ENCODE measurements at regions of chr3 and their contacts with region 1.

Region 1: DNA sequence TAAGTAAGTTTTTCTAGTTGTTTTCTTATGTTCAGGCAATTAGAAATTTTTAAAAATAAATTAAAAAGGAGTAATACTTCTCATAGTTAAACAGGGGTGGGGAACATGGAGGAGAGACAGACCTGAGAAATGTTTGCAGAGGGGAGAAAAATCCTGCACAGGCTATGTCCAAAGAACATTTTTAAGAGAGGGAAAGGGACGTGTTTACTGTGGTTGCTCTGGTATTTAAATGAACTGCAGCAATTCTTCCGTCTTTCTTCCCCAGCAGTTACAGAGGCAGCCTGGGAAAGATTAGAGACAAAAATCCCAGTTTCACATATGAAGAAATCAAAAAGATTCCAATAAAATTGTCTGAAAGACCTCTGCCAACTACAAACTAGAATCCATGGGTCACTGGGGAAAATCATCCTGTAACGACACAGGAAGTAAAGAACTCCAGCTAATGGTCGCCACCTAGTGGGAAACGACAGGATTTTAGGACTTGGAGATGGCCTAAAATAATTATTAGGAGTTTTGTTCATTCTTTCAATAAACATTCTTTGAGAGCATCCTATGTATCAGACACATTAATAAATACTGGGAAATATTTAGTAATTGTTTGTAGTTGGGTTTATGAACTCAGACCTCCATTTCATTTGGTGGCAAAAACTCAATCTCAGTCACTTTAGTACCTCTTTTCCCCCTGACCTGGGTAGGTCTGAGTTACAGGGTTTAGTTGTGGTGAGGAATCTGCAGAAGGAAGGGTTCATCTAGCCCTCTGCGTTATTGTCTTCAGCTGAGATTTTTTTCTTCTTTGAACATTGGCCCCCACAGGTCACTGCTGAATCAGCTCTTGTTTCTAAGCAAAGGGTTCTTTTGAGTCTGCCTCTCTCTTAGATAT is 69.9 kb upstream of the GOLIM4 start:
- DNase-seq: peak; percentile 73
- ATAC-seq: peak; percentile 94
- H3K4me3 ChIP-seq: peak overlapping the region in 2 of 3 experiments; percentile 42 to 44; a peak in 3 of 6 replicates
- H3K27ac ChIP-seq: no peak overlapping the region
- H3K4me1 ChIP-seq: peaks cover 6% of the 10 kb centered on the region; the same call in 1 of the 2 replicates
- H3K27me3 ChIP-seq: no peaks in the 10 kb centered on the region
- CTCF ChIP-seq: peak; percentile 80
- EP300 ChIP-seq: no peak
- POLR2A ChIP-seq: no peak
- RAD21 ChIP-seq: peak; percentile 60; the same call in 1 of the 2 replicates

Region 2: GRCh38 chr3:167928381-167928780 is 237.2 kb before region 1 on chr3:
- CTCF ChIA-PET with region 1: interaction called, 5 read pairs
- POLR2A ChIA-PET with region 1: no interaction called
- in situ Hi-C with region 1: loop called (anchors 25 kb)
- intact Hi-C with region 1: loop called (anchors 1 kb)
- DNase-seq: no peak
- ATAC-seq: no peak
- H3K4me3 ChIP-seq: no peak overlapping the region
- H3K27ac ChIP-seq: no peak overlapping the region
- H3K4me1 ChIP-seq: no peaks in the 10 kb centered on the region
- H3K27me3 ChIP-seq: no peaks in the 10 kb centered on the region
- CTCF ChIP-seq: no peak
- EP300 ChIP-seq: no peak
- POLR2A ChIP-seq: no peak
- RAD21 ChIP-seq: no peak

Region 3: DNA sequence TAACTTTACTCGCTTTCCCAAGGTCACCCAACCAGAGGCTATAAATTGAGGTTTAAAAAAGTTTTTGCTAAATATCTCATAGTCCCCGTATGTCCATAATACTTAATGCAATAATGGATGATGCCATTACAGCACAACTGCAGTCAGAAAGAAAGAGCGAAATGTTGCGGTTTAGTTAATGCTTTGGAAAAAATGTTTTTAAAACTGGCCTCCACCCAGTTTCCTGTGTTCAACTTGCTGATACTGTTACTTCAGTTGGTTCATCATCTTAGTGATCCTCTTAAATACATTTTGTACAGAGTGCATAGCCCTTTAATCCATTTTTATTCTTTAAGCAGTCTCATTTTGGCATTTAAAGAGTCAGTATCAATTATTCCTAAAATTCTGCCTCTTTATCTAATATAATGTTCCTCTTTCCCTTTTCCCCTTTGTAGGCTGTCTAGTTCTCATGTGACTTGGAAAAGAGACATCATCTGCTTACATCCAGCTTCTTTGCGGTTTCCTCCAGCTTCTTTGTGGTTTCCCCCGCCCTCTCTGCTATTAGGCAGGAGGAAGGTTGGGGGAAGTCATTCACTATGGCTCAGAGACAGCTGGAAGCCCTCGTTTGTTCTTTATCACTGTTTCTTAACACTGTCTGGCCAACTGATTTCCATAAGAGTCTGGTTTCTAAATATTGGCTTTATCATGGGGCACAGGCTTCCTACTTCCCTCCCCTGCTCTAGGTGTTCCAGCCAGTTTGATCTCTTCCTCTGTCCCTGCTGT is 224.2 kb before region 1 on chr3:
- CTCF ChIA-PET with region 1: no interaction called
- POLR2A ChIA-PET with region 1: no interaction called
- in situ Hi-C with region 1: loop called (anchors 25 kb)
- intact Hi-C with region 1: no loop called
- DNase-seq: no peak
- ATAC-seq: no peak
- H3K4me3 ChIP-seq: no peak overlapping the region
- H3K27ac ChIP-seq: no peak overlapping the region
- H3K4me1 ChIP-seq: no peaks in the 10 kb centered on the region
- H3K27me3 ChIP-seq: no peaks in the 10 kb centered on the region
- CTCF ChIP-seq: no peak
- EP300 ChIP-seq: no peak
- POLR2A ChIP-seq: no peak
- RAD21 ChIP-seq: no peak

Region 4: GRCh38 chr3:168047190-168047795 is 118.3 kb before region 1 on chr3:
- CTCF ChIA-PET with region 1: interaction called, 117 read pairs
- POLR2A ChIA-PET with region 1: no interaction called
- in situ Hi-C with region 1: loop called (anchors 5 kb)
- intact Hi-C with region 1: loop called (anchors 1 kb)
- DNase-seq: peak; percentile 76
- ATAC-seq: peak; percentile 87
- H3K4me3 ChIP-seq: no peak overlapping the region
- H3K27ac ChIP-seq: no peak overlapping the region
- H3K4me1 ChIP-seq: no peaks in the 10 kb centered on the region
- H3K27me3 ChIP-seq: no peaks in the 10 kb centered on the region
- CTCF ChIP-seq: peak; percentile 89
- EP300 ChIP-seq: no peak
- POLR2A ChIP-seq: no peak
- RAD21 ChIP-seq: peak; percentile 78

Region 5: DNA sequence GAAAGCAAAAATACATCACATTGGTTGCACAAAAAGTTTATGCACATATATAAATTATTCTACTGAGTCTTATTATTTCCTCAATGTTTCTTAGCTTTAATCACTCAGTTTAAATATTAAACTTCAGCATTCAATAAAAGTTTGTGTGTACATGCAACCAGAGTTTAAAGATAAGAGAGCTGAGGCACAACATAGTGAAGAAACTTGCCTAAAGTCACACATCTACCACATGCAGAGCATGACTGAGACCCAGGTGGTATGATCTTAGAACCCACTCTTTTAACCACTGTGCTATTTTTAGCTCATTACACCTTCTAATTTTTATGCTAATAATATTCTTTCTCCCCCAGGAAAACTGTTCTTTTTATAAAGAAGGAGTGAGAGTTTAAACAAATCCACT is 26.2 kb after region 1 on chr3:
- CTCF ChIA-PET with region 1: no interaction called
- POLR2A ChIA-PET with region 1: no interaction called
- in situ Hi-C with region 1: no loop called
- intact Hi-C with region 1: no loop called
- DNase-seq: no peak
- ATAC-seq: no peak
- H3K4me3 ChIP-seq: no peak overlapping the region
- H3K27ac ChIP-seq: no peak overlapping the region
- H3K4me1 ChIP-seq: peaks cover 7% of the 10 kb centered on the region
- H3K27me3 ChIP-seq: peaks cover 0 to 2% of the 10 kb centered on the region in 2 experiments; a peak in 1 of 5 replicates
- CTCF ChIP-seq: no peak
- EP300 ChIP-seq: no peak
- POLR2A ChIP-seq: no peak
- RAD21 ChIP-seq: no peak

Region 6: GRCh38 chr3:169052465-169053302 is 887.1 kb after region 1 on chr3:
- CTCF ChIA-PET with region 1: no interaction called
- POLR2A ChIA-PET with region 1: no interaction called
- in situ Hi-C with region 1: no loop called
- intact Hi-C with region 1: no loop called
- DNase-seq: no peak
- ATAC-seq: no peak
- H3K4me3 ChIP-seq: no peak overlapping the region
- H3K27ac ChIP-seq: no peak overlapping the region
- H3K4me1 ChIP-seq: no peaks in the 10 kb centered on the region
- H3K27me3 ChIP-seq: no peaks in the 10 kb centered on the region
- CTCF ChIP-seq: no peak
- EP300 ChIP-seq: no peak
- POLR2A ChIP-seq: no peak
- RAD21 ChIP-seq: no peak